ENCODE measurements at regions of chr2 and their contacts with region 1.

Region 1: DNA sequence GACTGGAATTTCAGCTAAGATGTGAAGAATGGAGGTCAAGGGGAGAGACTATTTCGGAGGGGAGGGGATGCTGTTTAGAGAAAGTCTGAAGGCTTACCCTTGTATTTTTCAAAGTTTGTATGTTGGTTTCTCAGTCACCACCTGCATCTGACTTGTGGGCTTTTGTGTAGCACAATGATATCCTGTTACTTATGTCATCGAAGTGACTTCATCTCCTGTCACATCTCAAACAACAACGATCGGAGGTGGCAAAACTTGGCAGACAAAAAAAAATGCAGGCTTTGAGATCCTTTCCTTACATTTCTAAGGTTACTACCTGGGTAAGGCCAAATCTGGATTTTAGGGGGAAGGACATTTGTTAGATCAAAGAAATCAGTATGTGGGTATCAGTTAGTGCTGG is 11.7 kb upstream of the CXCR4 start:
- DNase-seq: peak in 27 of 35 experiments; percentile 40 to 89 (median 61)
- ATAC-seq: peak; percentile 47 to 51 (median 50)
- H3K4me3 ChIP-seq: peak overlapping the region in 1 of 2 donors; percentile 16
- H3K4me3 Mint-ChIP-seq: peak overlapping the region; percentile 66 to 69 (median 68)
- H3K27ac ChIP-seq: peak overlapping the region; percentile 100
- H3K27ac Mint-ChIP-seq: peak overlapping the region; percentile 96 to 97
- H3K4me1 ChIP-seq: peaks cover 78 to 98% of the 10 kb centered on the region in 2 experiments
- H3K4me1 Mint-ChIP-seq: peaks cover 98 to 100% (median 99%) of the 10 kb centered on the region in 3 donors
- H3K27me3 ChIP-seq: no peaks in the 10 kb centered on the region
- H3K27me3 Mint-ChIP-seq: no peaks in the 10 kb centered on the region

Region 2: GRCh38 chr2:136049011-136049742 is 80.4 kb before region 1 on chr2:
- CTCF ChIA-PET with region 1: no interaction called
- POLR2A ChIA-PET with region 1: no interaction called
- DNase-seq: no peak
- ATAC-seq: peak in 3 of 4 experiments; percentile 16 to 25 (median 22)
- H3K4me3 ChIP-seq: no peak overlapping the region
- H3K4me3 Mint-ChIP-seq: peak overlapping the region in 2 of 3 donors; percentile 9 to 65
- H3K27ac ChIP-seq: peak overlapping the region; percentile 40
- H3K27ac Mint-ChIP-seq: peak overlapping the region; percentile 95 to 96
- H3K4me1 ChIP-seq: peaks cover 35 to 39% of the 10 kb centered on the region in 2 experiments
- H3K4me1 Mint-ChIP-seq: peaks cover 82 to 93% (median 87%) of the 10 kb centered on the region in 3 donors
- H3K27me3 ChIP-seq: no peaks in the 10 kb centered on the region
- H3K27me3 Mint-ChIP-seq: no peaks in the 10 kb centered on the region

Region 3: GRCh38 chr2:136112317-136113208 is 17.0 kb before region 1 on chr2:
- CTCF ChIA-PET with region 1: interaction called in 1 of 2 experiments, 3 read pairs
- POLR2A ChIA-PET with region 1: interaction called, 22 to 24 read pairs
- DNase-seq: peak in 2 of 35 experiments; percentile 46 to 55
- ATAC-seq: peak in 1 of 4 experiments; percentile 3
- H3K4me3 ChIP-seq: no peak overlapping the region
- H3K4me3 Mint-ChIP-seq: peak overlapping the region in 2 of 3 donors; percentile 94 to 99
- H3K27ac ChIP-seq: peak overlapping the region; percentile 6
- H3K27ac Mint-ChIP-seq: peak overlapping the region; percentile 58 to 70
- H3K4me1 ChIP-seq: peaks cover 16 to 20% of the 10 kb centered on the region in 2 experiments
- H3K4me1 Mint-ChIP-seq: peaks cover 51 to 53% (median 53%) of the 10 kb centered on the region in 3 donors
- H3K27me3 ChIP-seq: no peaks in the 10 kb centered on the region
- H3K27me3 Mint-ChIP-seq: no peaks in the 10 kb centered on the region

Region 4: DNA sequence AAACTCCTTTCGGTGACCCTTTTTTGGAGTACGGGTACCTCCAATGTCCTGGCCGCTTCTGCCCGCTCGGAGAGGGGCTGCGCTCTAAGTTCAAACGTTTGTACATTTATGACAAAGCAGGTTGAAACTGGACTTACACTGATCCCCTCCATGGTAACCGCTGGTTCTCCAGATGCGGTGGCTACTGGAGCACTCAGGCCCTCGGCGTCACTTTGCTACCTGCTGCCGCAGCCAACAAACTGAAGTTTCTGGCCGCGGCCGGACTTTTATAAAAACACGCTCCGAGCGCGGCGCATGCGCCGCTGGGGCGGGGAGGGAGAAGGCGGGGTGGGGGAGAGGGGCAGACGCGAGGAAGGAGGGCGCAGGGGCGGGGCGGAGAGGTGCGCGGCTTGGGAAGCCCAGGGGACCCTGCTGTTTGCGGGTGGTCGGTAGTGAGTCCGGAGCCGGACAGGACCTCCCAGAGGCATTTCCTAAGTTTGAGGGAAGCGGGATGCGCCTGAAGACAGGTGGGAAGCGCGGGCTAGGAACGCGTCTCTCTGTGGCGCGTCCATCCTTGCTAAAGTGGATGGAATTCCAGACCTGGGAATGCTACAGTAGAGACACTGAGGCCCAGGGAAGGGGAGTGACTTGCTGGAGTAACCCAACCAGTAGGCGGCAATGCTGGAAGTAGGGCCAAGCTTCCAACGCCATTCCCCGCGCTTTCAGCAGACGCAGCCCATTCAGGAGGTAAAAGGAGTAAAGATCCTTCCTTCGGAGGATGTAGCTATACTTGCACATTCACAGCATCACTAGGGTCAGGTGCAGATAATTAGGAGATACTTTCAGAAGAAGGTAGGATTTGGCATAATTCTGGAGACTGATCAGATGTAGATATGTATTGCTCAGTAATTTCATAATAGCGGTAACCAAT is 11.4 kb before region 1 on chr2 and contains the start of gene CXCR4:
- CTCF ChIA-PET with region 1: interaction called in 1 of 2 experiments, 11 read pairs
- POLR2A ChIA-PET with region 1: interaction called, 24 to 121 read pairs
- DNase-seq: peak; percentile 82 to 98 (median 92)
- ATAC-seq: peak; percentile 34 to 54 (median 52)
- H3K4me3 ChIP-seq: peak within 1 kb of the TSS; percentile 89 to 100
- H3K4me3 Mint-ChIP-seq: peak within 1 kb of the TSS; percentile 94 to 99 (median 99)
- H3K27ac ChIP-seq: peak within 1 kb of the TSS; percentile 99
- H3K27ac Mint-ChIP-seq: peak within 1 kb of the TSS; percentile 96 to 97
- H3K4me1 ChIP-seq: peaks cover 26 to 37% of the 10 kb centered on the region in 2 experiments
- H3K4me1 Mint-ChIP-seq: peaks cover 65 to 73% (median 66%) of the 10 kb centered on the region in 3 donors
- H3K27me3 ChIP-seq: no peaks in the 10 kb centered on the region
- H3K27me3 Mint-ChIP-seq: no peaks in the 10 kb centered on the region
- total RNA-seq, gene CXCR4: 274 to 1,514 (median 326) TPM

Region 5: GRCh38 chr2:136154402-136154783 is 24.8 kb after region 1 on chr2:
- CTCF ChIA-PET with region 1: no interaction called
- POLR2A ChIA-PET with region 1: no interaction called
- DNase-seq: no peak
- ATAC-seq: no peak
- H3K4me3 ChIP-seq: no peak overlapping the region
- H3K4me3 Mint-ChIP-seq: no peak overlapping the region
- H3K27ac ChIP-seq: no peak overlapping the region
- H3K27ac Mint-ChIP-seq: no peak overlapping the region
- H3K4me1 ChIP-seq: peaks cover 0 to 3% of the 10 kb centered on the region in 2 experiments
- H3K4me1 Mint-ChIP-seq: peaks cover 15 to 22% (median 18%) of the 10 kb centered on the region in 3 donors
- H3K27me3 ChIP-seq: no peaks in the 10 kb centered on the region
- H3K27me3 Mint-ChIP-seq: no peaks in the 10 kb centered on the region

Region 6: GRCh38 chr2:136195226-136195625 is 65.6 kb after region 1 on chr2:
- CTCF ChIA-PET with region 1: no interaction called
- POLR2A ChIA-PET with region 1: no interaction called
- DNase-seq: no peak
- ATAC-seq: no peak
- H3K4me3 ChIP-seq: no peak overlapping the region
- H3K4me3 Mint-ChIP-seq: no peak overlapping the region
- H3K27ac ChIP-seq: no peak overlapping the region
- H3K27ac Mint-ChIP-seq: no peak overlapping the region
- H3K4me1 ChIP-seq: no peaks in the 10 kb centered on the region
- H3K4me1 Mint-ChIP-seq: peaks cover 0 to 16% (median 7%) of the 10 kb centered on the region in 3 donors
- H3K27me3 ChIP-seq: no peaks in the 10 kb centered on the region
- H3K27me3 Mint-ChIP-seq: no peaks in the 10 kb centered on the region

Region 7: DNA sequence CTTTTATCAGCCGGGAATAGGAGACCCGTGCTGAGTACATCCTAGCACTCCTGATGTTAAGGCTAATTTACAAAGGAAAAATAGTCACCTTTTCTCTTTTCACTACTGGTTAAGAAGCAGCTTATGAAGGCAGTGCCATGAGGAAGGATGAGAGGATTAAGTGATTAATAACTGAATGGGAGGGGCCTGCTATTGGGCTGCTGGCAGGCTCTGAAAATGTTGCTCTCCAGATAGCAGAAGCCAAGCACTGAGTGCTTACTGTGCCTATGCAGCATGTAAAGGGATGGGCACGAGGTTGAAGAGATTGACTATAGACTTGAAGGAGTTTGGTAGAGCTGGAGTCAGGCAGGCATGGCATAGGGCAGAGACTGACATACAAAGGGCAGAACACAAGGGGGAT is 353.4 kb after region 1 on chr2:
- CTCF ChIA-PET with region 1: no interaction called
- POLR2A ChIA-PET with region 1: no interaction called
- DNase-seq: no peak
- ATAC-seq: no peak
- H3K4me3 ChIP-seq: no peak overlapping the region
- H3K4me3 Mint-ChIP-seq: no peak overlapping the region
- H3K27ac ChIP-seq: no peak overlapping the region
- H3K27ac Mint-ChIP-seq: no peak overlapping the region
- H3K4me1 ChIP-seq: no peaks in the 10 kb centered on the region
- H3K4me1 Mint-ChIP-seq: no peaks in the 10 kb centered on the region
- H3K27me3 ChIP-seq: peaks cover 0 to 15% of the 10 kb centered on the region in 2 experiments
- H3K27me3 Mint-ChIP-seq: peaks cover 3 to 7% of the 10 kb centered on the region in 2 donors